ENCODE measurements at regions of chr2 and their contacts with region 1.

Region 1: DNA sequence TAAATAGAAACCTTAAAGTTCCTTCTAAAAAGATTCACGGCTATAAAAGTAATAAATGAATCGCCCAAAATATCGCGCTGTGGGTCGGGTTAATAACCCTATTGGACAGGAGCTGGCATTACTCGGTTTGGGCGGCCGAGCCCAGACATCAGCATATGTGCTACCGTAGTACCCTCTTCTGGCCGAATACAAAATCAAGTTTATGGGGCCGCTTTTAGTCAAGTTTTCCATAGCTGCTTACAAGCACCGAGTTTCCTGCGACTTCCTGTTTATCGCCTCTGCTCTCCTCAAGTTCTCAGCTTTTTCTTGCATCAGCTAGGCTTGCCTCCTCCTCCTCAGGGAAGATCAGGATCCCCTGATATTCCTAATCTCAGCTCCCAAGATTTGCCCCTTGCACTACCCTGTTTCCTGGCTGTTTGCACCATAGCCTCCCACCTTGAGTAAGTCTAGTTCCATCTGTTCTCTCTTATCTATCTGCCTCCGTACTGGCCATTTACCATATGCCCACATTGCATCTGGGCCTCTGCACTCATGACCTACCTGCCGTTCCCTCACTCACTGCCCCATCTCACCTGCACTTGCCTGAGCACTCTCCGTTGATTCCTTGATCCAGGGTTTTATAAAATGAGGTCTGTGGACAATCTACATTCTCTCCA is 56.1 kb downstream of the SLC35F5 start:
- H3K4me3 Mint-ChIP-seq: peak overlapping the region; percentile 30
- H3K27ac Mint-ChIP-seq: no peak overlapping the region
- H3K4me1 Mint-ChIP-seq: peaks cover 11% of the 10 kb centered on the region
- H3K27me3 Mint-ChIP-seq: no peaks in the 10 kb centered on the region

Region 2: GRCh38 chr2:113602869-113603466 is 97.3 kb before region 1 on chr2:
- intact Hi-C with region 1: loop called (anchors 5 kb)
- H3K4me3 Mint-ChIP-seq: peak overlapping the region; percentile 77
- H3K27ac Mint-ChIP-seq: peak overlapping the region; percentile 92
- H3K4me1 Mint-ChIP-seq: no peaks in the 10 kb centered on the region
- H3K27me3 Mint-ChIP-seq: no peaks in the 10 kb centered on the region

Measured in dendritic cell treated with granulocyte-macrophage colony-stimulating factor and Interleukin-4, amounts not matched to agents 40 ng/mL and 50 ng/mL, for 4 days (primary cell).